HAP-1 (cell line): ENCODE measurements at regions of chr2 and their contacts with region 1.

Region 1: DNA sequence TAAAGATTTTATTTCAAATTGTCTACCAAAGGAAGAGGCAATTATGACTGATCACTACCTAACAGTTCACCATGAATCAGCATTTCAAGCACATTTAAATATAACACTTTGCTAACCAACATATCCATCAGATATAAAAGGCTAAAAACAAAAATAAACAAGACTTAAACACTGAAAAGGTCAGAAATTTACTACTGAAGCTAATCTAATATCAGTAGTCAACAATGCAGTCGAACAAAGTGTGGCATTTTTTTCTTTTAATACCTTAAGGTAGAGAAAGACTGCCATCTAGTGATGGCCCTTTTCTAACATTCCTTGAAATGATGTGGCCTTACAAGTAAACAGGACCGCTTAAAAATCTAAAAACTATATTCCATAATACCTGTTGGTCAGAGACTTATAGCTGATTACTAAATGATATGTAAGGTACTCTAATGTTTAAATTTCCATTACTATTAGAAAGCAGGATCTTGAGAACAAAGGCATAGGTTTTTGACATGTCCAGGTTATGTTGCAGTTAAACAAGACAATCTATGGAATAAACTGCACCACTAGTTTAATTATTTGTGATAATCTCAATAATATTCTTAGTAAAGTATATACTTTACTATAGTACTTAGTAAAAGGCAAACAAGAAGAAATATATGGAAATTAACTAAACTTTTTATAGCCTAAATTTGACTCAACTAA is 80.0 kb downstream of the EXOC6B start:
- DNase-seq: peak; percentile 31 to 74
- H3K4me3 ChIP-seq: no peak overlapping the region
- H3K4me1 ChIP-seq: peaks cover 4% of the 10 kb centered on the region
- H3K27me3 ChIP-seq: no peaks in the 10 kb centered on the region

Region 2: GRCh38 chr2:71558300-71559051 is 1187.3 kb before region 1 on chr2:
- in situ Hi-C with region 1: loop called (anchors 10 kb)
- DNase-seq: no peak
- H3K4me3 ChIP-seq: no peak overlapping the region
- H3K4me1 ChIP-seq: no peaks in the 10 kb centered on the region
- H3K27me3 ChIP-seq: no peaks in the 10 kb centered on the region

Region 3: DNA sequence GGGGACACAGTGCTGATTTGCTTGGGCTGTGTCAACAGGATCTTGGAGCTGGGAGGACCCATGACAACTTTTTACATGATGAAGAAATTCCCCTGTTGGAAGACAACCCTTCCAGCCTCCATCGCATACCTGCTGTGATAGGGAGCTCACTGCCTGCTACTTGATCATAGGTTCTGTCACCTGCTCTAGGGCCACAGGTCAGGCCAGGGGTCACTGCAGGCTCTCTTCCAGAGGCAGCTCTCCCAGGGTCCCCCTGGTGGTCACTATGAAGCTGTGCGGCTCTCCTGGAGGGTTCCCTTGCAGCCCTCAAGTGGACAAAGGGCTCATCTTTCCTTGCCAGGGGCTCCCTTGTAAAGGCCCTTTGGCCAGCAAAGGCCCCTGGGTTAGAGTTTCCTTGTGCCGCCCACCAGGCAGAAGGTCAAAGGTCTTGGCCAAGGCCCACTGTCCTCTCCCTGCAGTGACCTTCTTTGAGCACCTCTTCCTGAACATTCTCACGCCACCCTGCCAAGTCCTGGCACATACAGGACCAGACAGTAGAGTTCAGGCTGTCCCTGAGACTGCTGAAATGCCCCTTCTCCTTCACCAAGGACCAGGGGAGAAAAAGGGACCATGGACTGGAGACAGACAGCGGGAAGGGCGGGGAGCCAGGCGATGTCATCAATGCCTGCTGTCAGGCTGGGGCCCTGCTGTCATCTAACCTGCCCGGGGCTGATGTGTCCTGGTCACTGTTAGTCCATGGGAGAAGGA is 947.4 kb before region 1 on chr2:
- in situ Hi-C with region 1: loop called (anchors 25 kb)
- DNase-seq: peak; percentile 3 to 56
- H3K4me3 ChIP-seq: no peak overlapping the region
- H3K4me1 ChIP-seq: no peaks in the 10 kb centered on the region
- H3K27me3 ChIP-seq: no peaks in the 10 kb centered on the region

Region 4: DNA sequence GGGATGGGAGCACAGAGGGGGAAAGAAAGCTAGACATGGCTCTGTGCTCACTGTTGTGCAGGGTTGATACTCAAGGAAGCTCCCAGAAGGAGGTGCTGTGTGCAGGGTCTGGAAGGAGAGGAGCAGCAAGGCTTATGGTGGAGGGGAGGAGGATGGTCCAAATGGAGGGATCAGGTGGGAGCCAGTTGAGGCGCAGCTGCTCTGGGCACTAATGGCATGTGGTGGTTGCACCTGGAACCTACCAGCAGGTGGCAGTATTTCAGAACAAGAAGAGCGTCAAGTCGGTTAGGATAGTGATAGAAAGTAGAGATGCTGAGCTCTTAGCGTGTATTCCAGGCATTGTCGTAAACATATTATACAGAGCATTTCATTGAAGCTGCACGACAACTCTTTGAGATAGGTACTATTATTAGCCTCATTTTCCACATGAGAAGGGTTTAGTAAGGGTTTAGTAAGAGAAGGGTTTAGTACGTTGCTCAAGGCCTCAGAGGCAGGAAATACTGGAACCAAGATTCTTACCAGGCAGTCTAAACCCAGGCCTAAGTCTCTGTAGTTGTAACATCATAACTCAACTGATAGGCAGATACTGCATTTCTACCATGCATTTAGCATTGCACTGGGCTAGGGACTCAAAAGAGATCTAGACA is 821.8 kb before region 1 on chr2:
- in situ Hi-C with region 1: loop called (anchors 10 kb)
- DNase-seq: peak; percentile 72 to 80
- H3K4me3 ChIP-seq: no peak overlapping the region
- H3K4me1 ChIP-seq: no peaks in the 10 kb centered on the region
- H3K27me3 ChIP-seq: no peaks in the 10 kb centered on the region

Region 5: DNA sequence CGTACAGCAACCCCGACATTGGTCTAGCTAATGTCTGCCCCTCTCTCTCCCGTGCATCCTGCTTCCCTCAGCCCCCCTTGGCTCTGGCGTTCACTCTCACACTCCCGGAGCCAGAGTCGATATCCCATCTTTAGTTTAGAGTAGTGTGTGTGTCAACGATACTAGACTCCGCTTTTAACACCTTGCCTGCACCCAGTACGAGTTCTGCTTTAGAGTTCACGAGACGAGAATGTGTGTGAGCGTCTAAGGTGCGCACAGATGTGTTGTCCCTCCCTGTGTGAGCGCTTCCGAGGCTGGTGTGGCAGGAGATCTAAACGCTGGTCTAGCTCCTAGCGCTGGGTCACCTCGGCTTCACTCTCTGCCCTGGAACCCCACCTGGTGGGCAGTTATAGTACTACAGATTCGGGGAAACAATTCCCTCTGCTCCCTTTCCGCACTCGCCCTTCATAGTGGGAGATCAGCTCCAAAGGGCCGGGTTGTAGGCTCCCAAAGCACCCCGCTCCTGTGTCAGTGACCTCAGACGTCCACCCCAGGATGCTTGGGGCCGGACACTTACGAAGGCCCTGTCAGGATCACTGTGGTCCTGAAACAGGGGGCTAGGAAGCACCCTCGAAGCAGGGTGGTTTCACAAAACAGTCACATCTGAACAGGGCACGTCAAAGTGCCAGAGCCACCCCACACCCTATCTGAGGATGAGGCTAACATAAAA is 595.5 kb before region 1 on chr2:
- in situ Hi-C with region 1: loop called (anchors 25 kb)
- DNase-seq: peak; percentile 64 to 90
- H3K4me3 ChIP-seq: no peak overlapping the region
- H3K4me1 ChIP-seq: peaks cover 5% of the 10 kb centered on the region
- H3K27me3 ChIP-seq: peaks cover 12% of the 10 kb centered on the region